ENCODE measurements at regions of chr6 and their contacts with region 1.

Region 1: GRCh38 chr6:149746147-149746946 is at the start of gene NUP43:
- DNase-seq: peak; percentile 77 to 94 (median 92)
- H3K4me3 ChIP-seq: peak within 1 kb of the TSS; percentile 43 to 100 (median 85)
- H3K27ac ChIP-seq: peak within 1 kb of the TSS in 58 of 59 donors; percentile 18 to 92 (median 80)
- H3K27me3 ChIP-seq: no peaks in the 10 kb centered on the region
- CTCF ChIP-seq: peak; percentile 33 to 83 (median 64)
- total RNA-seq, gene NUP43: 12.9 to 41.8 (median 23.7) TPM

Region 2: GRCh38 chr6:149648148-149649145 is 97.9 kb before region 1 on chr6 and contains the start of gene KATNA1:
- intact Hi-C with region 1: loop called in 1 of 2 experiments (anchors 2 kb)
- DNase-seq: peak; percentile 63 to 93 (median 78)
- H3K4me3 ChIP-seq: peak within 1 kb of the TSS; percentile 60 to 99 (median 90)
- H3K27ac ChIP-seq: peak within 1 kb of the TSS in 56 of 59 donors; percentile 4 to 90 (median 76)
- H3K27me3 ChIP-seq: no peaks in the 10 kb centered on the region
- CTCF ChIP-seq: peak in 39 of 56 donors; percentile 5 to 58 (median 35)
- total RNA-seq, gene KATNA1: 4.9 to 16.3 (median 9.9) TPM

Region 3: DNA sequence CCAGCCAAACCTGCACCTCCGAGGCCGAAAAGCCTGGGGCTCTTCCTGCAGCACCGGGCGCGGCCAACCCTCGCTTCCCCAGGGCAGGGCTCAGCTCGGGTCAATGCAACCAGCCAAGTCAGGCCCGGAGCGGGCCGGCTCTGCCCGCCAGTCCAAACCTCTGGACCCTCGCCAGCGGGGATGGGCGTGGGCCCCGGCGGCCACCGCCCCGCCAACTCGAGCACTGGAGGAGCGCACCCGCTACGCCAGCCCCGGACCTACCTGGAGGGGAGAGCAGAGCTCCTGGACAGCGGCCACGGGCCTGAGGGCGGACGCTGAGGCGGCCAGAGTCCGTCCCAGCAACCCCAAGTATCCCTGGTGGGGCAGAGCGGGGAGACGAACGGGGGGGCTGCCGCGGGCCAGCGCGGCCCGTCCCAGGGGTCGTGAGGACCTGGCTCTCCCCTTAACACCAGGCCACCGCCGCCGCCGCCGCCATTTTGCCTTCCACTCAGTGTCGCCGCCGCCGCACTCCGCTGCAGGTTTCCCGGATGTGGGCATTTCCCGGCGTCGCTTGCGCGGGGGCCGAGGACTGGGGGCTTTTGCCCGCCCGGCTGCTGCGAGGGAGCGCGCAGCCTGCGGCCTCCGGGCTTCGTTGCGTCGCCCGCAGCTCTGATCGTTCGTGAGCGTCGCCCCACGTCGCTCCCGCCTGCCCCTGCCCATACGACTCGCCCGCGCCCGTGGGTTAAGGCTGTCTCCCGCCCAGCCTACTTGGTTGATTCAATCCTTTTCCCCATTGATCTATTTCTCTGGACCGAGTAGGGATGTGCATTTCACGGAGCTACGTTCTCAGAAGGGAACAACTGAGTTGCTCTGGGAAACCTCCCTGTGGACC is 28.5 kb before region 1 on chr6 and contains the start of gene LATS1:
- intact Hi-C with region 1: loop called in 1 of 2 experiments (anchors 2 kb)
- DNase-seq: peak; percentile 78 to 94 (median 90)
- H3K4me3 ChIP-seq: peak within 1 kb of the TSS; percentile 56 to 100 (median 96)
- H3K27ac ChIP-seq: peak within 1 kb of the TSS; percentile 85 to 100 (median 97)
- H3K27me3 ChIP-seq: no peaks in the 10 kb centered on the region
- CTCF ChIP-seq: peak in 41 of 56 donors; percentile 3 to 60 (median 30)
- total RNA-seq, gene LATS1: 26.8 to 50.8 (median 36.9) TPM

Region 4: GRCh38 chr6:149815788-149816187 is 69.4 kb after region 1 on chr6:
- intact Hi-C with region 1: loop called in 1 of 2 experiments (anchors 10 kb)
- DNase-seq: no peak
- H3K4me3 ChIP-seq: no peak overlapping the region
- H3K27ac ChIP-seq: no peak overlapping the region
- H3K27me3 ChIP-seq: no peaks in the 10 kb centered on the region
- CTCF ChIP-seq: no peak

Region 5: DNA sequence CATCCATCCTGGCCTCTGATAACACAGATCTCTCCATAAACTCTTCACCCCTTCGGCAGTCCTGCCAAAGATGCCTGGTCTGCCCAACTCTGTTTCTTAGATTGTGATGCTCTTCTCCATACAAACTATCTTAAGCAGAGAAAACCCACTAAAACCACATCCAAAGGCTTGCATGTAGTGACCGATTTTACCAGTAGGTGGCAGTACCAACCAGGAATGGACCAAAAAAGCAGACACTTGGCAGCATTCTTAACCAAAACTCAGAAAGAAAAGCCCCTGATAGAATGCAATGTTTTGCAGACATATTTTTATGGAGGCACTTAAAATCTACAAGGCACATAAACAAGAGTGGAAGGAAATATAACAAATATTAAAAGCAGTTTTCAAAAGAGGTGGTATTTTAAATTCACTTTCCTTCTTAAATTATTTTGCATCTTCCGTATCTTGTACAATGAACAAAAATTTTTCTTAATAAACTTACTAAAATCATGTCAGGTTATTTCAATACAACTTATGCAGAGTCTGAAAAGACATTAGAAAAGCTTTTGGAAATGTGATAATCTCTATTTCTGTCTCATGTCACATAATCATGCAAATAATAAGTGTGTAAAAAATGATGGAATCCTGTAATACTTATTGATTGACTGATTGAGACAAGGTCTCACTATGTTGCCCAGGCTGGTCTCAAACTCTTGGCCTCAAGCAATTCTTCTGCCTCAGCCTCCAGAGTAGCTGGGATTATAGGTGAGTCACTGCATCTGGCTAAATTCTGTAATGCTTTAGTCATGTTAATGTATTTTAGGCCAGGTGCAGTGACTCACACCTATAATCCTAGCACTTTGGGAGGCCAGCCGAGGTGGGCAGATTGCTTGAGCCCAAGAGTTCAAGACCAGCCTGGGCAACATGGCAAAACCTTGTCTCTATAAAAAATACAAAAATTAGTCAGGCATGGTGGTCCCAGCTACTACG is 88.5 kb after region 1 on chr6:
- intact Hi-C with region 1: loop called (anchors 5 kb)
- DNase-seq: peak in 5 of 10 donors; percentile 46 to 78 (median 48)
- H3K4me3 ChIP-seq: no peak overlapping the region
- H3K27ac ChIP-seq: peak overlapping the region in 13 of 59 donors; percentile 1 to 46 (median 26)
- H3K27me3 ChIP-seq: no peaks in the 10 kb centered on the region
- CTCF ChIP-seq: peak; percentile 86 to 100 (median 96)